Activated naive CD4-positive, alpha-beta T cell treated with anti-CD3 and anti-CD28 coated beads, Interleukin-2, amount 10 ng/mL, durations not matched to agents 7 days and 5 days (primary cell): ENCODE measurements at regions of chr19 and their contacts with region 1.

Region 1: DNA sequence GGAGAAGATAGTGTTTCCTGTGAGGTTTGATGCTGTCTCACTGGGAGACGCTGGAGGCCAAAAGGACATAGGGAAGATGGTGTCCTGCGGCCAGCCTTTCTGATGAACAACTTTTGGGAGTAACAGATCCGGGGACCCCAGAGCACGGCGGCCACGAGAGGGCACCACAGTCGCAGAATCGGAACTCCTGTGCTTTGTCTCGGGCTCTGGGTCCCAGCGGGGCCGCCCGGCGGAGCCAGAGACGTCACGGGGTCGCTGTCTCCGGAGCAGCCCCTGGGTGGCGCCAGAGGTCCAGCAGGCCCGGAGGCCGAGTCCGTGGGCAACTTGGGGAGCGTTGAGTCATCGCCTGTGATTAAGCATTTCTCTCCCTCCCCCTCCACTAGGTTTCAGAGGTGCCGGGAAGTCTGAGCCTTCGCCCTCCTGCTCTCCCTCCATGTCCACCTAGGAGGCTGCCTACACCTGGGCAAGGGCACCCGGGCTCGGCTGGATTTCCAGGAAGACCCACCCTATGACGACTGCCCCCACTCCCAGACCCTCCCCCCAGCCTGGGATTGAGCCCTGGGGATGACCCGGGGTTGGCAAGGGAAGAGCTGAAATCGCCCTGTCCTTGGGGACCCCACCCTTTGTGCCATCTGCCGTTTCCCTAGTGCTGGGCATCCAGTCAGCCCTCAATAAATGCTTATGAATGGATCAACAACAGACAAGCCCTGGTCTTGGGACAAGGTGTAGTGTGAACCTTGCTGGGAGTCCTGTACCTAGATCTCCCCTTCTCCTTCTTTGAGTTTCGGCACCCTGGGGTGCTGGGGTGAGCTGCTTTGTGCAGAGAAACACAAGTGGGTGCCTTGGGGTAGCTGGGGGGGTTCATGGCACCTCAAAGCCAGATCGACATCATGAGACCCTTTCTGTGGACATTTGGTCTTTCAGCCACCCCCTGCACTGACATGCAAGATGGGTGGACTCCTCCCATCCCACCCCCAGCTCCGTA is 3.4 kb downstream of the NANOS3 start:
- DNase-seq: peak; percentile 98
- H3K4me3 Mint-ChIP-seq: peak overlapping the region; percentile 35
- H3K27ac Mint-ChIP-seq: peak overlapping the region; percentile 87
- H3K4me1 Mint-ChIP-seq: peaks cover 46% of the 10 kb centered on the region
- H3K27me3 Mint-ChIP-seq: peaks cover 24% of the 10 kb centered on the region

Region 2: DNA sequence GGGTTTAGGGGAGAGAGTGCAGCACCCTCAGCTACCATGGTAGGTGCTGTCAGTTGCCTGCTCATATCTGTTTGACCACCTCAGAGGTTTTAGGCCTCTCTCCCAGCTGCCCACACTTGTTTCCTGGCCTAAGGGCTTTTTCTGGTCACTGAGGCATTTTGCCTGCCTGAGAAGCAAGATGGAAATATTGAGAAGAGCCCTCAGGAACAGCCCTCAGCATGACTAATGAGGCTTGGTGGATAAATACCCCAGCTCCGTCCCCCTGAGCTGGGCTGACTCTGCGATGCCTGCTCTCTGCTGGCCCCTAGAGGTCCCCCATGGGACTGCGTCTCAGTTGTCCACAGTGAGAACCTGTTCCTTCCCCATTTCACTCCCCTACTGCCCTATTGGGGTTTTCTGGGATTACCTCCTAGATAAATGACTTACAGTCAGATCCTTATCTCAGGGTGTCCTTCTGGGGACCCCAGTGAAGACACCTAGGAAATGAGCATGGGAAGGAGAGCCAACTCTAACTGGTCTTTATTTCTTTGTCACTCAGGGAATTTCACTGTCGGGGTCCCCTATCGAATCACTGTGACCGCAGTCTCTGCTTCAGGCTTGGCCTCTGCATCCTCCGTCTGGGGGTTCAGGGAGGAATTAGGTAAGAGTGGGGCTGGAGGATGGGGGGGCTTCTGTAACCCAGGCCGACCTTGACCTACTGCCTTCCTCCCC is 168.2 kb after region 1 on chr19:
- CTCF ChIA-PET with region 1: interaction called, 14 read pairs
- DNase-seq: peak; percentile 80
- H3K4me3 Mint-ChIP-seq: no peak overlapping the region
- H3K27ac Mint-ChIP-seq: peak overlapping the region; percentile 49
- H3K4me1 Mint-ChIP-seq: no peaks in the 10 kb centered on the region
- H3K27me3 Mint-ChIP-seq: no peaks in the 10 kb centered on the region

Region 3: DNA sequence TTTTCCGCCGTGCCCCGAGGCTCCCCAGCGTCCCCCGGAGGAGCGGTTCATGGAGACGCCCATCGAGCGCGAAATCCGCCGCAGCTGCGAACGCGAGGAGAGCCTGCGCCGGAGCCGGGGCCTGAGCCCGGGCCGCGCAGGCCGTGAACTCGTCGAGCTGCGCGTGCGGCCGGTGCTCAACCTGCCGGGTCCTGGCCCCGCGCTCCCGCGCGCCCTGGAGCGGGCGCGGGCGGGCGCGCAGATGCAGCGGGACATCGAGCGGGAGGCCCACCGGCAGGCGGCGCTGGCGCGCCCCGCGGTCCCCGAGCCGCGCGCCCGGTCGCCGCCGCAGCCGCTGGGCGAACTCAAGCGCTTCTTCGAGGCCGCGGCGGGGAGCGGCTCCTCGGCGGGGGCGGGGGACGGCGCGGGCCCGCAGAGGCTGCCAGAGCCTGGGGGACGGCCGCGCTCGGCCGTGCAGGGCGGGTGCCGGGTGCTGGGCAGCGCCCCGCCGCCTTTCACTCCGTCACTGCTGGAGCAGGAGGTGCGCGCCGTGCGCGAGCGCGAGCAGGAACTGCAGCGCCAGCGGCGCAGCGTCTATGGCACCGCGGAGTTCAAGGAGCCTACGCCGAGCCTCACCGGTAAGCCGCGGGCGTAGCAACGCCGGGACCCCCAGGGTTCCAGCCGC is 193.0 kb after region 1 on chr19:
- CTCF ChIA-PET with region 1: interaction called, 67 read pairs
- DNase-seq: peak; percentile 81
- H3K4me3 Mint-ChIP-seq: peak overlapping the region; percentile 91
- H3K27ac Mint-ChIP-seq: peak overlapping the region; percentile 85
- H3K4me1 Mint-ChIP-seq: peaks cover 32% of the 10 kb centered on the region
- H3K27me3 Mint-ChIP-seq: peaks cover 59% of the 10 kb centered on the region

Region 4: GRCh38 chr19:14081325-14082093 is 201.2 kb after region 1 on chr19:
- CTCF ChIA-PET with region 1: interaction called, 17 read pairs
- DNase-seq: peak; percentile 99
- H3K4me3 Mint-ChIP-seq: peak overlapping the region; percentile 81
- H3K27ac Mint-ChIP-seq: peak overlapping the region; percentile 86
- H3K4me1 Mint-ChIP-seq: peaks cover 28% of the 10 kb centered on the region
- H3K27me3 Mint-ChIP-seq: no peaks in the 10 kb centered on the region

Region 5: DNA sequence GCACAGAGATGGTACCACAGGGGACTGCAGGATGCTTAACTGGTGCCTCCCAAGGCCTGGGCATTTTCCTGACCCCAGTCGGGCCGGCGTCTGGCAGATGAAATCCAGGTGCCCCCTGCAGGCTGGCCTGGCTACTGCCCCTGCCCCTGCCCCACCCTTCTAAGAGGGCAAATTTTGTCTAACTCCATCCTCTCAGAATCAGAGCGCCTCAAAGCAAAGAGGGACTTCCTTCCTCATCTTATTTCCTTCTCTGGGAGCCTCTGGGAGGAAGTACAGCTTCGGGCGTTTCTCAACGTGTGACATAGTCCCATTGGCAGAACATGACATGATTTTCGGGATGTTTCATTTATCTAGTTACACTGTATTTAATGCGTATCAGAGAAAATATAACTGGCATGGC is 234.5 kb after region 1 on chr19:
- CTCF ChIA-PET with region 1: interaction called, 31 read pairs
- DNase-seq: peak; percentile 69
- H3K4me3 Mint-ChIP-seq: no peak overlapping the region
- H3K27ac Mint-ChIP-seq: no peak overlapping the region
- H3K4me1 Mint-ChIP-seq: peaks cover 61% of the 10 kb centered on the region
- H3K27me3 Mint-ChIP-seq: no peaks in the 10 kb centered on the region